ENCODE measurements at regions of chr1 and their contacts with region 1.

Region 1: DNA sequence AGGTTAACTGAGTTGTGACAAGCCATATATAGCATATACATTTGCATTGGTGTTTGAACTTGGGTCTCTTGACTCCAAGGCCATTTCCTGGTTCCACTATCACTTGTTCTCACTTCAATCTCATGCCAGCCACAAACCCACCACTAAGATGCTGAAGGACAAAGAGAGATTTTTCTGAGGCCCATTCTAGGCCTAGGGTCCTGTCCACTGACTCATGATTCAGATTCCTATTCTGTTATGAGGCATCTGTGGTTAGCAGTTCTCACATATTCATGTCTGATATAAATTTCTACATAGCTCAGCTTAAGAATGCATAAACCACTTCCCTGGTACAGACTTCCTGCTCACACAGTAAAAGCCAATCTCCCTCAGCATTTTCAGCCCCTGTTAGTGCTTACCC is 326.1 kb upstream of the BEND5 start:
- DNase-seq: peak; percentile 41
- H3K4me3 Mint-ChIP-seq: no peak overlapping the region
- H3K27ac Mint-ChIP-seq: peak overlapping the region; percentile 82
- H3K4me1 Mint-ChIP-seq: peaks cover 57% of the 10 kb centered on the region
- H3K27me3 Mint-ChIP-seq: no peaks in the 10 kb centered on the region
- CTCF ChIP-seq: no peak

Region 2: GRCh38 chr1:48931506-48932251 is 171.1 kb before region 1 on chr1:
- CTCF ChIA-PET with region 1: no interaction called
- intact Hi-C with region 1: loop called (anchors 5 kb)
- DNase-seq: peak; percentile 63
- H3K4me3 Mint-ChIP-seq: peak overlapping the region; percentile 12
- H3K27ac Mint-ChIP-seq: peak overlapping the region; percentile 9
- H3K4me1 Mint-ChIP-seq: peaks cover 13% of the 10 kb centered on the region
- H3K27me3 Mint-ChIP-seq: no peaks in the 10 kb centered on the region
- CTCF ChIP-seq: no peak

Region 3: DNA sequence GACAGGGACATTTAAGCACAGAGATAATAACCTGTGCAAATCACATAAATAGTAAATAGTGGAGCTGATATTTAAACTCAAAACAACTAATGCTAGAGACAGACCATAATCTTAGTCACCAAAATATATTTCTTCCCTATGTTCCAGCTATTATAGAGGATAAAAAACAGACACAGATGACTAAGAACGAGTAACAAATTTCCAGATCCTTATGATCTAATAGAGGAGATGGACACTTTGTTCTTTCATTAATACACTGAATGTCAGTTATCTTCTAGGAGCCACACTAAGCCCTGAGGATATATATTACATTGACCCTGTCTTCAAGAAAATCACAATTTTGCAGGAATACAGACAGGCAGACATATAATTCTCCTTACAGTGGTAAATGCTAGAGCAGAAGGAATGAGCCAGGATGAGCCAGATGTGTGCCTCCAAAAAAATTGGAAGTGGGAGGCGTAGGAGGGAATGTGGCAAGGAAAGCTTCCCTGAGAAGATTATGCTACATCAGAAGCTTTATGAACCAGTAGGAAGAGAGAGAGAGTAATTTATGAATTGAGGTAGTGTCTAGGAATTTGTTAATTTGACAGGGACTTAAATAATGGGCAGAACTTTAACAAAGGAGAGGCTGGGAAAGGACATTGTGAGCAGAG is 69.3 kb after region 1 on chr1:
- CTCF ChIA-PET with region 1: no interaction called
- intact Hi-C with region 1: no loop called
- DNase-seq: no peak
- H3K4me3 Mint-ChIP-seq: no peak overlapping the region
- H3K27ac Mint-ChIP-seq: no peak overlapping the region
- H3K4me1 Mint-ChIP-seq: peaks cover 5% of the 10 kb centered on the region
- H3K27me3 Mint-ChIP-seq: no peaks in the 10 kb centered on the region
- CTCF ChIP-seq: no peak

Region 4: GRCh38 chr1:49630156-49630555 is 527.4 kb after region 1 on chr1:
- CTCF ChIA-PET with region 1: no interaction called
- intact Hi-C with region 1: loop called (anchors 2 kb)
- DNase-seq: peak; percentile 14
- H3K4me3 Mint-ChIP-seq: no peak overlapping the region
- H3K27ac Mint-ChIP-seq: no peak overlapping the region
- H3K4me1 Mint-ChIP-seq: peaks cover 13% of the 10 kb centered on the region
- H3K27me3 Mint-ChIP-seq: no peaks in the 10 kb centered on the region
- CTCF ChIP-seq: no peak

Region 5: GRCh38 chr1:50080909-50081586 is 978.3 kb after region 1 on chr1:
- CTCF ChIA-PET with region 1: interaction called, 4 read pairs
- intact Hi-C with region 1: loop called (anchors 2 kb)
- DNase-seq: peak; percentile 49
- H3K4me3 Mint-ChIP-seq: no peak overlapping the region
- H3K27ac Mint-ChIP-seq: no peak overlapping the region
- H3K4me1 Mint-ChIP-seq: no peaks in the 10 kb centered on the region
- H3K27me3 Mint-ChIP-seq: no peaks in the 10 kb centered on the region
- CTCF ChIP-seq: peak; percentile 34